G401 (cell line): ENCODE measurements at regions of chr1 and their contacts with region 1.

Region 1: DNA sequence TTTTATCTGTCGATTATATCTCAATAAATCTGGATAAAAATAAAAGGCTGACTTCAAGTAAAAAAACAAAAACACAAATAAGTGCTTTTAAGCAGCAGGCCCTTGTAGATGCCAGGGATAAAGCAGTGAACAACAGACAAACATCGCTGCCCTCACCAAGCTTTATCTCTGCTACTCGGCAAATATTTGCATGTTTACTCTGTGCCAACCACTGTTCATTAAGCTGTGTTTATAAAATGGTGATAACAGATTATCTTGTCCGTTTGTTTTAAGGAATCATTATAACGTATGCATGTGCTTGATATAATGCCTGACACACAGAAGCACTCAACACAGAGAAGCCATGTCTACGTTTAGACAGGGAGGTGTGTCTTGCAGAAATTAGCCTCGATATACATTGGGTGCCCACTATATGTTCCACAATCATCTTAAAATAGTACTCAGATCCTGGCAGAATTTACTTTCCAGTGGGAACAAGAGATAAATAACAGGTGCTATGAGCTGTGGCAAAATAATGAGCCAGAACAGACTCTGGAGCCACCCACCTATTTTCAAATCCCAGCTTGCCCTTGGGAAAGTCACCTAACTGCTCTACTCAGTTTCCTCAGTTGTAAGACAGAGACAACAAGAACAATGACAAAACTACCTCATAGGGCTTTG is 47.2 kb downstream of the TRIT1 start:
- DNase-seq: no peak

Region 2: DNA sequence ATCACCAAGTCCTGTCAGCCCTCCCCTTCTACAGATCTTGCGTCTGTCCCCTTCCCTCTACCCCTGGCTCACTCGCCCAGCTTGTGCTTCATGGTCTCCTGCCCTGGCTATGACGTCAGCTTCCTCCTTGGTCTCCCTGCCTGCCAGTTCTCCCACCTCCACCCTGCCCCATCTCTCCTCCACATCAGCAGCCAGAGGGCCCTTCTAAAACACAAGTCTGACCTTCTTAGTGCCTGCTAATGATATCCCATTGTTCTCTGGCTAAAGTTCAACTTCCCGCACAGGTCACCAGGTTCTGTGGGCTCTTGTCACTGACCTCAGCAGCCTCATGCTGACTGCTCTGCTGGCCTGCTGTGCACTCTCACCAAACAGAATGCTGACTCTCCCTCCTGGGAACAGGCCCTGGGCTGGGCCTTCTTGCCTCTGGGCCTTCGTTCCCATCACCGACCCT is 90.3 kb after region 1 on chr1:
- in situ Hi-C with region 1: no loop called
- DNase-seq: no peak

Region 3: GRCh38 chr1:39977206-39977605 is 141.1 kb after region 1 on chr1:
- in situ Hi-C with region 1: loop called (anchors 5 kb)
- DNase-seq: no peak